Activated CD8-positive, alpha-beta T cell treated with anti-CD3 and anti-CD28 coated beads, Interleukin-2, amount 10 ng/mL, durations not matched to agents 7 days and 5 days (primary cell): ENCODE measurements at regions of chr15 and their contacts with region 1.

Region 1: DNA sequence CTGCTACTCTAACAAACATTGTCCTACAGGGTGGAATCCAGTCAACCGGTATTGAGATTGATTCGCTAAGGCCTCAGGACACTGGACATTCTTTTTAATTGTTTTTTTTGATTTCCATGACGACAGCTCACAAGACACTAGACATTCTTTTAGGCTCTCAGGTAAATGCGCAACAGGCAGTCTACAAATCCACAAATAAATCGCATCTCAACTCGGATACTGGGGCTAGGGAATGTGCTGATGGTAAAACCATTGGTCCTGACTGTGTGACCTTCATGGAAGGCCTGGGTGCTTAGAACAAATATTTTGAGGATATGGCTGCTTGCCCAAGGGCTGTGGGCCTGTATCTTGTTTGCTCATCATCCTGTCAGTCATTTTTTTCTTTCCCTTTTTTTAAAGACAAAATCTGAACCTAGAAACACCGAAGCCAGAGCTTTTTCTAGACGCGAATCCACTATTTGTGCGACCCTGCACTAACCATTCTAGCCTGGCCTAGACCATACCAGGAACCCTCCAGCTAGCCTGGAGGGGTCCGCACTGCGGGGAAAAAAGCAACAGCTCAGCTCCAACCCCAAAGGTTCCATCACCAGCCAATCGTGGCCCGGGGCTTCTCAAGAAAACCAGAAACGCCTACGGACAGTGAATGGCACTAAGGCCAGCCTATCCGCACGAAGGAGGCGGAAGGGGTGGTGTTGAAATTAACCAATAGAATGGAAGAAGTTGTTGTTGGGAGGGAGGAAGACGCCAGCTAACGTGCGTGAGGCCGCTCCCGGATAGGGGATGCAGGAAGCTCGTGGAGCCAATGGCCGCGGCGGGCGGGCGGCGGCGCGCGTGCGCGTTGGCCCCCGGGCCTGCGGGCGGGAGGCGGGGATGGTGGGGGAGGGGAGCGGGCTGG is 18.1 kb upstream of the CHD2 start:
- DNase-seq: peak; percentile 99
- ATAC-seq: peak; percentile 94
- H3K4me3 Mint-ChIP-seq: peak overlapping the region; percentile 92
- H3K27ac Mint-ChIP-seq: peak overlapping the region; percentile 98
- H3K4me1 Mint-ChIP-seq: peaks cover 61% of the 10 kb centered on the region
- H3K27me3 Mint-ChIP-seq: no peaks in the 10 kb centered on the region

Region 2: GRCh38 chr15:92494806-92495336 is 387.2 kb before region 1 on chr15:
- CTCF ChIA-PET with region 1: no interaction called
- POLR2A ChIA-PET with region 1: no interaction called
- DNase-seq: no peak
- ATAC-seq: no peak
- H3K4me3 Mint-ChIP-seq: no peak overlapping the region
- H3K27ac Mint-ChIP-seq: no peak overlapping the region
- H3K4me1 Mint-ChIP-seq: no peaks in the 10 kb centered on the region
- H3K27me3 Mint-ChIP-seq: peaks cover 6% of the 10 kb centered on the region

Region 3: GRCh38 chr15:92808978-92809879 is 72.8 kb before region 1 on chr15:
- CTCF ChIA-PET with region 1: interaction called, 72 read pairs
- POLR2A ChIA-PET with region 1: interaction called, 401 read pairs
- DNase-seq: peak; percentile 99
- ATAC-seq: peak; percentile 86
- H3K4me3 Mint-ChIP-seq: peak overlapping the region; percentile 81
- H3K27ac Mint-ChIP-seq: peak overlapping the region; percentile 96
- H3K4me1 Mint-ChIP-seq: peaks cover 50% of the 10 kb centered on the region
- H3K27me3 Mint-ChIP-seq: no peaks in the 10 kb centered on the region

Region 4: GRCh38 chr15:92825989-92826384 is 56.1 kb before region 1 on chr15:
- CTCF ChIA-PET with region 1: interaction called, 56 read pairs
- POLR2A ChIA-PET with region 1: interaction called, 228 read pairs
- DNase-seq: no peak
- ATAC-seq: no peak
- H3K4me3 Mint-ChIP-seq: no peak overlapping the region
- H3K27ac Mint-ChIP-seq: no peak overlapping the region
- H3K4me1 Mint-ChIP-seq: peaks cover 36% of the 10 kb centered on the region
- H3K27me3 Mint-ChIP-seq: no peaks in the 10 kb centered on the region

Region 5: GRCh38 chr15:92839696-92840095 is 42.4 kb before region 1 on chr15:
- CTCF ChIA-PET with region 1: interaction called, 6 read pairs
- POLR2A ChIA-PET with region 1: interaction called, 228 read pairs
- DNase-seq: peak; percentile 40
- ATAC-seq: peak; percentile 60
- H3K4me3 Mint-ChIP-seq: peak overlapping the region; percentile 17
- H3K27ac Mint-ChIP-seq: peak overlapping the region; percentile 74
- H3K4me1 Mint-ChIP-seq: peaks cover 46% of the 10 kb centered on the region
- H3K27me3 Mint-ChIP-seq: no peaks in the 10 kb centered on the region

Region 6: DNA sequence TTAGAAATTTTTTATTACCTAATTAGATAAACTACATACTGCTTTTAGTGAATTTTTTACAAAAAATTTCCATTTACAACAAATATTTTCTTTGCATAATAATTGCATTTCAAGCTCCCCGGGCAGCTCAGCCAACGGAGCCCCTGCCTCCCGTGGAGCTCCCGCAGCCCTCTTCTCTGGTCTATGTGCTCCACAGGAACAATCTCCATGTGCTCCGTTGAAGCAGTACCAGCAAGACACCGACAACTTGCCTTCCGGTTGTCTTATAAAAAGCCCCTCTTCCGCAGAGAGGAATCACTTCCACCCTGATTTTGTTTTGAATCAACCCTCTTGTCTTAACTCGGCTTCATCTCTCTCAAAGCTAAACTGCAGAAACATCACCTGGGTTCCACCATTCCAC is 28.8 kb before region 1 on chr15:
- CTCF ChIA-PET with region 1: interaction called, 5 read pairs
- POLR2A ChIA-PET with region 1: interaction called, 93 read pairs
- DNase-seq: no peak
- ATAC-seq: no peak
- H3K4me3 Mint-ChIP-seq: no peak overlapping the region
- H3K27ac Mint-ChIP-seq: no peak overlapping the region
- H3K4me1 Mint-ChIP-seq: peaks cover 25% of the 10 kb centered on the region
- H3K27me3 Mint-ChIP-seq: no peaks in the 10 kb centered on the region

Region 7: DNA sequence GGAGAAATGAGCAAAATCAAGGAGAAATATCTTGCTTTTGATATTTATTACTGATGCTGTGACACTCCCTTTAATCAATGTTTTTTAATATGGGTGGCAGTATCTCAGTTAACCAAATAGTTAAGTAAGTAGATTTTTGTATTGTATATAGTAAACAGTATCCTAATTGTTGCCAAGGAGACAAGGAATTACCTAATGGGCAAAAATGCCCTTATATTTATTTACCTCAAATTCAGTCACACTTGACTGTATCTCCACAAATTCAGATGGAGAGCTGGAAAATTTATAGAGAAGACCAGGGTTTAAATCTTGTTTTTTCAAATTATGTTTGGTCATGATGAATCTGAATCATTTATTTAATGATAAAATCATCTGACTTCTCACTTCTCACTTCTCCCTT is 14.5 kb after region 1 on chr15:
- CTCF ChIA-PET with region 1: interaction called, 80 read pairs
- POLR2A ChIA-PET with region 1: interaction called, 594 read pairs
- DNase-seq: no peak
- ATAC-seq: no peak
- H3K4me3 Mint-ChIP-seq: peak overlapping the region; percentile 26
- H3K27ac Mint-ChIP-seq: peak overlapping the region; percentile 45
- H3K4me1 Mint-ChIP-seq: peaks cover 68% of the 10 kb centered on the region
- H3K27me3 Mint-ChIP-seq: no peaks in the 10 kb centered on the region

Region 8: DNA sequence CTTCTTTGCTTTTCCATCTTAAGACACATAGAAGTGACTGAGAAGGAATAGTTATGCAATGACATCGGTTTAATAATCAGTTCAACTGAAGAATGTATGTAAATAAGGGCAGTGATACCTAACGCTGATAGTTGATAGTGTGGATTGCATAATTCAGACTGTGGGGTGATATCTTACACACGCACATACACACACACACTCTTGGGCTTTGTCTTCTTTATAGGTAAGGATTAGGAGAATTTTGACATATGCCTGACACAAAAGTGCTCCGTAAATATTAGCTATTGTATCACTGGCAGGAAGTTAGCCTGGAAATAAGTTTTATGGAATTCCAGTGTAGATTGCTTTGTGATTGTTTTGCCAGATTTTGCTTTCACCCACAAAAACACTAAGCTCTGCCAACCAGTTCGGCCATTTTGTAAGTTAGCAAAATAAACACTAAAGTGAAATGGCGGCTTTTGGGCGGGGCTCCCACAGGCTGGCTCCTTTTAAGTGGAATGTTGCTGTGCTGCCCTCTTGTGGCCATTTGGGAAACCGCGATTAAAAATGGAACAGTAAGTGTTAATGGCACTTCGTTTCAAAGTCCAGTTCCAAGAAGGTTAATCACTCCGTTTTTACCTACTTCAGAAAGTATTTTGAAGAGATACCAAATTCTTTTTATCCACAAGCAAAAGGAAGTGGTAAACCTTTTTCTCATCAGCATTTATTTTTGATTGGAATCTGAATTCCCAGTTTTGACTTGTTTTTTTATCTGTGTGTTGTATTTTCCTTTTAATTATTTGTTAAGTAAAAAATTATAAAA is 35.8 kb after region 1 on chr15:
- CTCF ChIA-PET with region 1: interaction called, 81 read pairs
- POLR2A ChIA-PET with region 1: interaction called, 107 read pairs
- DNase-seq: peak; percentile 97
- ATAC-seq: peak; percentile 36
- H3K4me3 Mint-ChIP-seq: peak overlapping the region; percentile 12
- H3K27ac Mint-ChIP-seq: peak overlapping the region; percentile 79
- H3K4me1 Mint-ChIP-seq: peaks cover 84% of the 10 kb centered on the region
- H3K27me3 Mint-ChIP-seq: no peaks in the 10 kb centered on the region